Stomach (tissue), 19 donors: ENCODE measurements at regions of chr1 and their contacts with region 1.

Region 1: DNA sequence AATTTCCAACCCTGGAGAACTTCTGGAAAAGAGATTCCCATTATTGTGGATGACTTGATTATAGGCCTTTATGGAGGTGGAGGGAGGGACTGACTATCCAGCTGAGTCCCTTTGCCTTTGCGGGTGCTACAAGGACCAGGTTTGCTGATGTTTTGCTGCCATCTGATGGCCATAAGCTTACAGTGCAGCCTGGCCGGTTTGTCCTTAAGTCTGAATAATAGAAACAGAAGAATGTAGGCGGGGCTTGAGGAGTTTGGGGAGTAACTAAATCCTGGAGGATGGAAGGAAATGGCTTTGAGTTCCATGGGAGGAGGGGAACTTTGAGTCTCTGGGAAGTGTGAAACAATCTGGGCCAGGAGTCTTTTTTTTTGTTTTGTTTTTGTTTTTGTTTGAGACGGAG is 55.7 kb upstream of the CD1D start:
- DNase-seq: peak; percentile 85 to 96
- H3K4me3 ChIP-seq: no peak overlapping the region
- H3K27ac ChIP-seq: no peak overlapping the region
- H3K4me1 ChIP-seq: no peaks in the 10 kb centered on the region
- H3K27me3 ChIP-seq: peaks cover 0 to 15% (median 2%) of the 10 kb centered on the region in 3 donors
- CTCF ChIP-seq: peak in 5 of 7 experiments; percentile 83 to 98 (median 89)
- EP300 ChIP-seq: no peak
- POLR2A ChIP-seq: no peak

Region 2: GRCh38 chr1:157969697-157970485 is 155.1 kb before region 1 on chr1:
- intact Hi-C with region 1: loop called (anchors 2 kb)
- DNase-seq: peak in 1 of 2 donors; percentile 75
- H3K4me3 ChIP-seq: no peak overlapping the region
- H3K27ac ChIP-seq: peak overlapping the region in 2 of 5 donors; percentile 42 to 65
- H3K4me1 ChIP-seq: peaks cover 0 to 20% (median 8%) of the 10 kb centered on the region in 4 donors
- H3K27me3 ChIP-seq: no peaks in the 10 kb centered on the region
- CTCF ChIP-seq: peak in 5 of 7 experiments; percentile 19 to 53 (median 50)
- EP300 ChIP-seq: no peak
- POLR2A ChIP-seq: no peak

Region 3: DNA sequence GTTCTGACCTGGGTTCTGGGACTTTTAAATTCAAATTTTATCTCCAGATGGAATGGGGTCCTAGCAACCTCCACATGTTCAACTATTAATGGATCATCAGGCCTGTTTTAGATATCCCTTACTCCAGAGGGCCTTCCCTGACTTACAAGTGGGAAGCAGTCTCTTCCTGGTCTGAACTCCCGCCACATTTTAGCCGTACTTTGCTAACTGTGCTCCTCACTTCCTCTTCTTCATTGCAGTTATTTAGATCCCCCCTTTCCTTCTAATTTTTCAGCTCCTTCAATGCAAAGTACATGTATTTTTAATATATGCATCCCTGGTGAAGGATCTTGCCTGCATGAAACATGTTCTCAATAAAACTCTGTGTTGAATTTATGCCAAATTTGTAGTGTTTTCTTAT is 132.9 kb after region 1 on chr1:
- intact Hi-C with region 1: no loop called
- DNase-seq: no peak
- H3K4me3 ChIP-seq: no peak overlapping the region
- H3K27ac ChIP-seq: no peak overlapping the region
- H3K4me1 ChIP-seq: no peaks in the 10 kb centered on the region
- H3K27me3 ChIP-seq: no peaks in the 10 kb centered on the region
- CTCF ChIP-seq: no peak
- EP300 ChIP-seq: no peak
- POLR2A ChIP-seq: no peak